PC-3 (cell line): ENCODE measurements at regions of chr7 and their contacts with region 1.

Region 1: DNA sequence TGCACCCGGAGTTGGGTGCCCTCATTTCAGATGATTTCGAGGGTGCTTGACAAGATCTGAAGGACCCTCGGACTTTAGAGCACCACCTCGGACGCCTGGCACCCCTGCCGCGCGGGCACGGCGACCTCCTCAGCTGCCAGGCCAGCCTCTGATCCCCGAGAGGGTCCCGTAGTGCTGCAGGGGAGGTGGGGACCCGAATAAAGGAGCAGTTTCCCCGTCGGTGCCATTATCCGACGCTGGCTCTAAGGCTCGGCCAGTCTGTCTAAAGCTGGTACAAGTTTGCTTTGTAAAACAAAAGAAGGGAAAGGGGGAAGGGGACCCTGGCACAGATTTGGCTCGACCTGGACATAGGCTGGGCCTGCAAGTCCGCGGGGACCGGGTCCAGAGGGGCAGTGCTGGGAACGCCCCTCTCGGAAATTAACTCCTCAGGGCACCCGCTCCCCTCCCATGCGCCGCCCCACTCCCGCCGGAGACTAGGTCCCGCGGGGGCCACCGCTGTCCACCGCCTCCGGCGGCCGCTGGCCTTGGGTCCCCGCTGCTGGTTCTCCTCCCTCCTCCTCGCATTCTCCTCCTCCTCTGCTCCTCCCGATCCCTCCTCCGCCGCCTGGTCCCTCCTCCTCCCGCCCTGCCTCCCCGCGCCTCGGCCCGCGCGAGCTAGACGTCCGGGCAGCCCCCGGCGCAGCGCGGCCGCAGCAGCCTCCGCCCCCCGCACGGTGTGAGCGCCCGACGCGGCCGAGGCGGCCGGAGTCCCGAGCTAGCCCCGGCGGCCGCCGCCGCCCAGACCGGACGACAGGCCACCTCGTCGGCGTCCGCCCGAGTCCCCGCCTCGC is at the start of gene EGFR:
- DNase-seq: peak; percentile 76
- ATAC-seq: peak; percentile 80
- H3K4me3 ChIP-seq: peak within 1 kb of the TSS; percentile 90
- H3K27ac ChIP-seq: peak within 1 kb of the TSS; percentile 69
- H3K4me1 ChIP-seq: peaks cover 27% of the 10 kb centered on the region
- H3K27me3 ChIP-seq: no peaks in the 10 kb centered on the region
- CTCF ChIP-seq: no peak
- total RNA-seq, gene EGFR: 50.0 and 64.6 TPM in 2 replicates

Region 2: GRCh38 chr7:54995631-54996340 is 22.8 kb before region 1 on chr7:
- CTCF ChIA-PET with region 1: interaction called, 10 read pairs
- POLR2A ChIA-PET with region 1: interaction called, 5 read pairs
- intact Hi-C with region 1: no loop called
- DNase-seq: peak; percentile 96
- ATAC-seq: peak; percentile 94
- H3K4me3 ChIP-seq: peak overlapping the region; percentile 9; the same call in 1 of the 2 replicates
- H3K27ac ChIP-seq: peak overlapping the region; percentile 91
- H3K4me1 ChIP-seq: peaks cover 28% of the 10 kb centered on the region
- H3K27me3 ChIP-seq: no peaks in the 10 kb centered on the region
- CTCF ChIP-seq: no peak